ENCODE measurements at regions of chr1 and their contacts with region 1.

Region 1: DNA sequence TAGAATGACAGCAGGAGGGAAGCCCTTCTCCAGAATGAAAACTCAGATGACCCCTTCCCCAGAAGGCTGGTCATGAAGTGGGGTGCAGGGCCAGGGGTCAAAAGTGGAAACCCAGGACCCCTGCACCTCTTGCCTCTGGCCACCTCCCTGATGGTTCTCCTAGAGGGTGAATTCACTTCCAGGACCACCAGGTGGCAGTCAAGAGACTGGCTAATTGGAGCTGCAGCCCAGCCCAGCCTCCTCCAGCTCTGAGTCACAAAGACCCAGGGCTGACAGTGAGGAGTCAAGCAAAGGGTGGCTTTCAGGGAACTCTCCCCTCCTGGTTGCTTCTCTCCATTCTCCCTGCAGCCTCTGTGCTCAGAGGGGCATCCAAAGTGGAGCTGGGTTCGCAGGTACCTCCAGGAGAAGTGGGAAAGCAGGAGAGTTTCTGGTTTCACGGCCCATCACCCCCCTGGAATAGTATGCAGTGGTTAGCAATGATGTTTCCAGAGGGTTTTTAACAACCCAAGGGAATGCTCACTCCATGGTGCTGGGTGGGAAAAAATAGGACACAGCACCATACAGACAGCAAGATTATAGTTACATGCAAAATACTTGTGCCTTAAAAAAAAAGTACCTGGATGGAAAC is 6.1 kb upstream of the EPHB2 start:
- DNase-seq: peak; percentile 68
- H3K4me3 ChIP-seq: no peak overlapping the region
- H3K27ac ChIP-seq: no peak overlapping the region
- H3K4me1 ChIP-seq: no peaks in the 10 kb centered on the region
- H3K27me3 ChIP-seq: no peaks in the 10 kb centered on the region
- CTCF ChIP-seq: peak; percentile 81 to 95

Region 2: GRCh38 chr1:22362626-22363402 is 341.7 kb before region 1 on chr1:
- CTCF ChIA-PET with region 1: no interaction called
- dilution Hi-C with region 1: no loop called
- in situ Hi-C with region 1: no loop called
- intact Hi-C with region 1: no loop called
- DNase-seq: no peak
- H3K4me3 ChIP-seq: no peak overlapping the region
- H3K27ac ChIP-seq: no peak overlapping the region
- H3K4me1 ChIP-seq: no peaks in the 10 kb centered on the region
- H3K27me3 ChIP-seq: peaks cover 3% of the 10 kb centered on the region
- CTCF ChIP-seq: no peak

Region 3: GRCh38 chr1:22662318-22662717 is 42.2 kb before region 1 on chr1:
- CTCF ChIA-PET with region 1: no interaction called
- dilution Hi-C with region 1: no loop called
- in situ Hi-C with region 1: no loop called
- intact Hi-C with region 1: no loop called
- DNase-seq: peak; percentile 2
- H3K4me3 ChIP-seq: no peak overlapping the region
- H3K27ac ChIP-seq: no peak overlapping the region
- H3K4me1 ChIP-seq: no peaks in the 10 kb centered on the region
- H3K27me3 ChIP-seq: no peaks in the 10 kb centered on the region
- CTCF ChIP-seq: no peak

Region 4: DNA sequence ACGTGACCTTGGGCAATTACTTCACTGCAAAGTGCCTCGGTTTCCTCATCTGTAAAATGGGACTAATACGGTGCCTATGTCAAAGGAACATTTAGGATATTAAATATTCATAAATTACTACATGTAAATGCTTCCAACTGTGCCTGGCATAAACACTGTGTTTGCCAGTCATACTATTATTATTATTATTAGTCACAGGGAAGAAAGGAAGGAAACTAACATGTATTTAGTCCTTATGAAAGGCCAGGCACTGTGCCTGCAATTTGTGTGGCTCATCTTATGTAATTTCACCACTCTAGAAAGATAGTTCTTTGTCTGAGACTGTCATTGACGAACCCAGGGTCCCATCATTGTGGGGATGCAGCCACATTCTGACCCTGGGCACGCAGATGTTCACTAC is 51.1 kb after region 1 on chr1:
- CTCF ChIA-PET with region 1: no interaction called
- dilution Hi-C with region 1: loop called (anchors 5 kb)
- in situ Hi-C with region 1: no loop called
- intact Hi-C with region 1: no loop called
- DNase-seq: no peak
- H3K4me3 ChIP-seq: no peak overlapping the region
- H3K27ac ChIP-seq: no peak overlapping the region
- H3K4me1 ChIP-seq: peaks cover 13% of the 10 kb centered on the region
- H3K27me3 ChIP-seq: no peaks in the 10 kb centered on the region
- CTCF ChIP-seq: no peak

Region 5: GRCh38 chr1:22876359-22877111 is 172.0 kb after region 1 on chr1:
- CTCF ChIA-PET with region 1: no interaction called
- dilution Hi-C with region 1: no loop called
- in situ Hi-C with region 1: loop called (anchors 10 kb)
- intact Hi-C with region 1: no loop called
- DNase-seq: peak; percentile 31
- H3K4me3 ChIP-seq: no peak overlapping the region
- H3K27ac ChIP-seq: no peak overlapping the region
- H3K4me1 ChIP-seq: peaks cover 32% of the 10 kb centered on the region
- H3K27me3 ChIP-seq: no peaks in the 10 kb centered on the region
- CTCF ChIP-seq: no peak

Region 6: DNA sequence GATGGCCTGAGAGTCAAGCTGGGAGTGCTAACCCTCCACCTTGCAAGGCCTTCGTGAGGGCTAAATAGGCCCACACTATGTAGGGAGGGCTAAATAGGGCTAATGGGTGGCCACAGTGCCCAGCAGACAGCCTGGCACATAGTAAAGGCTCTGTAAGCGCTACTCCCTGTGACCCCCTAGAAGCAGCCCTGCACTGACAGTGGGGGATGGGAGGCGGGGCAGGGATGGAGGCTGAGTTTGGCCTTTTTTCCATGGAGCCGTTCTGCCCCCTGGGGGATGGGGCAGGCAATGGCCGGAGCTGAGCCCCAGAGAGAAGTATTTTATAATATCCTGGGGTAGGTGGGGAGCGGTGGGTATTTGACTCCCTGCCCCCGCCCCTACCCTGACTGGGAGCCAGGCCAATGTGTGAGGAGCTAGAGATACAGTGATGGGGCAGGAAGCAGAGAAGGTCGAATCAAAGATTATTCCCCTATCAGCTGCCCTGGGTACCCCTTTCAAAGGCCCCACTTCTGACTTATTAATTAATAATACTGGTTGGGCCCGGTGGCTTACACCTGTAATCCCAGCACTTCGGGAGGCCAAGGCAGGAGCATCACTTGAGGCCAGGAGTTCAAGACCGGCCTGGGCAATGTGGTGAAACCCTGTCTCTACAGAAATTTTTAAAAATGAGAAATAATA is 225.8 kb after region 1 on chr1:
- CTCF ChIA-PET with region 1: interaction called, 9 read pairs
- dilution Hi-C with region 1: no loop called
- in situ Hi-C with region 1: no loop called
- intact Hi-C with region 1: loop called (anchors 1 kb)
- DNase-seq: peak; percentile 16
- H3K4me3 ChIP-seq: no peak overlapping the region
- H3K27ac ChIP-seq: no peak overlapping the region
- H3K4me1 ChIP-seq: no peaks in the 10 kb centered on the region
- H3K27me3 ChIP-seq: no peaks in the 10 kb centered on the region
- CTCF ChIP-seq: peak; percentile 67 to 82